Activated CD8-positive, alpha-beta T cell treated with anti-CD3 and anti-CD28 coated beads, Interleukin-2, amount 10 ng/mL, durations not matched to agents 7 days and 5 days (primary cell): ENCODE measurements at regions of chrX and their contacts with region 1.

Region 1: DNA sequence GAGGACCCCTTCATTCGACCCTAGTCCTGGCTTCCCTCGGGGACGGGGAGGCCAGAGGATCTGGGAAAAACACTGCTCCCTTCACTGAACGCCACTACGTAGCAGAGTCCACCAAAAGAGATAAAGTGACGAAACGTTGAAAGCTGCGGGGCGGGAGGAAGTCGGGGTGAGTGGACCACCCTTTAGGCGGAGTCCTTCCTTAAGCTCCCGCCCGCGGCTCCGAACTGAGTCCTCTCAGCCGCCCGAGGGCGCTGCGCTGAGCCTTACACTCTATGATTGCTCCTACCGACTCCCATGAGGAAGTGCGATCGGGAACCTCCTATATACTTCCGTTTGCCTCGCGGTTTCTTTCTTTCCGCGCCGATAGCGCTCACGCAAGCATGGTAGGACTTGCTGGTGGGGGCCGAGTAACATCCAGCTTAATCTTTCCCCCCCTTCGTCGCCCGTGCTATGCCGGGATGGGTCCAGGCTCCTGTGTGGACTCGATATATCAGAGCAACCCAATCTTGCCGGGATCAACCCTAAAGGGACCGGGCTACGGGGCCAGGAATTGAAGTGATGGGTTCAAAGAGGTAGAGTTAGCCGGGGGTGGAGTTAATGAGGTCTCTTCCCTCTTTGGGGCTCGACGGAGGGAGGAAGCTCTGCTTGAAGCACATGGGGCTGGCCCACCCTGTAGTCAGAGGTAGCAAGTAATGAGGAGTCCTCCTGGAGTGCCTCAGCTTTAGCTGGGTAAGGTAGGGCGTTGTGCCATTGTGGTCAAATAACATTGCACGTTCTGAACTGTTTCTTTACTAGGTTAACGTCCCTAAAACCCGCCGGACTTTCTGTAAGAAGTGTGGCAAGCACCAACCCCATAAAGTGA is at the start of gene RPL36A:
- DNase-seq: peak; percentile 86
- ATAC-seq: peak; percentile 96
- H3K4me3 Mint-ChIP-seq: peak within 1 kb of the TSS; percentile 94
- H3K27ac Mint-ChIP-seq: peak within 1 kb of the TSS; percentile 92
- H3K4me1 Mint-ChIP-seq: peaks cover 20% of the 10 kb centered on the region
- H3K27me3 Mint-ChIP-seq: no peaks in the 10 kb centered on the region
- total RNA-seq, gene RPL36A: 220 to 270 TPM

Region 2: GRCh38 chrX:101348452-101349192 is 42.3 kb before region 1 on chrX and contains the start of gene TIMM8A:
- CTCF ChIA-PET with region 1: interaction called, 5 read pairs
- POLR2A ChIA-PET with region 1: interaction called, 11 read pairs
- DNase-seq: peak; percentile 83
- ATAC-seq: peak; percentile 99
- H3K4me3 Mint-ChIP-seq: peak within 1 kb of the TSS; percentile 88
- H3K27ac Mint-ChIP-seq: peak within 1 kb of the TSS; percentile 91
- H3K4me1 Mint-ChIP-seq: peaks cover 15% of the 10 kb centered on the region
- H3K27me3 Mint-ChIP-seq: no peaks in the 10 kb centered on the region
- total RNA-seq, gene TIMM8A: 15.9 to 17.1 TPM